Activated naive CD4-positive, alpha-beta T cell treated with anti-CD3 and anti-CD28 coated beads for 36 hours (primary cell): ENCODE measurements at regions of chr2 and their contacts with region 1.

Region 1: DNA sequence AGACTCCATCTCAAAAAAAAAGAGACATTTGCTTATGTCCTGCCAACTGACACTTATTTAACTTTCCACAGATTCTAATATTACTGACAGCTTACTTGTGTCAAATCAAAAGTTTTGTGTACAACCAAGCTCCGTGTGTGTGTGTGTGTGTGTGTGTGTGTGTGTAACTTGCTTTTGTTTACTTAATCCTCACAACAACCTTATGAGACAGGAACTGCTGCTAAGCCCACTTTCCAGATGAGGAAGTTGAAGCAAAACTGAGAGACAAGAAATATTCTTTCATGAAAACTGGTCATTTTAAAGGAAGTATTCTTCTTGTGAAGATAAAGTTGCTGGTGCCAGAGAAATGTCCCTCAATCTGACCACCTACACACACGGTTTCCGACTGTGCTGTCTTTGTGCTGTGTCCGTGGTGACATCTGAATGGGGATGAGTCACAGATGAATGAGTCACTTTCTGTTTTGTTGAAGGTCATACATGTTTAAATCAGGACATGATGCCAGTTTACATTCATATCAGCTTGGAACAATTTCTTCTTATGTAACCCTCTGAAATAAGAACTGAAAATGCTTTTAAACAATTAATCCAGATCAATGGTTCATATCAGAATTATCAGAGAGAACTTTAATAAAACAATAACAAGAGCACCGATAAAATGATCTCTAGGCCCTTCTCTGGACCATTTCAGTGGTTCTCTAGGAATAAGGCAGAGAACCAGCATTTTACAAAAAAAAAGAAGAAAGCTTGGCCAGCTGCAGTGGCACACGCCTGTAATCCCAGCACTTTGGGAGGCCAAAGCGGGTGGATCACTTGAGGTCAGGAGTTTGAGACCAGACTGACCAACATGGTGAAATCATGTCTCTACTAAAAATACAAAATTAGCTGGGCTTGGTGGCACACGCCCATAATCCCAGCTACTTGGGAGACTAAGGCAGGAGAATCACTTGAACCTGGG is 95.5 kb downstream of the THNSL2 start:
- DNase-seq: peak; percentile 21
- H3K4me3 Mint-ChIP-seq: no peak overlapping the region
- H3K27ac Mint-ChIP-seq: no peak overlapping the region
- H3K4me1 Mint-ChIP-seq: peaks cover 5% of the 10 kb centered on the region
- H3K27me3 Mint-ChIP-seq: peaks cover 7% of the 10 kb centered on the region

Region 2: DNA sequence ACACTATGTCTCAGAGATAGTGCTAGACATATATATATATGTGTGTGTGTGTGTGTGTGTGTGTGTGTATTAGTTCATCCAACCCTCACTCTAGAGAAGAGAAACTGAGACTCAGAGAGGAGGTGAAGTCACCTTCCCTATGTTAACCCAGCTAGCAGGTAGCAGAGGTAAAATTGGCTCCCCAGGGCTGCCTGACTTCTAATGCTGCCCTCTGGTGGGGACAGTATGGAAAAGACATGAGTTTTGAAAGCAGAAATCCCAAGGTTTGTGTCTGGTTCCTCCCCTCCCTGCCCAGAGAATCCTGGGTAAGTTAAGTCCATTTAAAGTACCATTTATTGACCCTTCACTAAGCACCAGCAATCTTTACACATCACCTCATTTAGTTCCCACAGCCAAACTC is 42.2 kb after region 1 on chr2:
- CTCF ChIA-PET with region 1: no interaction called
- intact Hi-C with region 1: loop called (anchors 5 kb)
- DNase-seq: peak; percentile 34
- H3K4me3 Mint-ChIP-seq: no peak overlapping the region
- H3K27ac Mint-ChIP-seq: no peak overlapping the region
- H3K4me1 Mint-ChIP-seq: no peaks in the 10 kb centered on the region
- H3K27me3 Mint-ChIP-seq: peaks cover 15% of the 10 kb centered on the region